ENCODE measurements at regions of chr6 and their contacts with region 1.

Region 1: GRCh38 chr6:24205020-24205492 is 79.0 kb downstream of the NRSN1 start:
- DNase-seq: peak; percentile 78
- ATAC-seq: peak; percentile 51
- H3K4me3 ChIP-seq: no peak overlapping the region
- H3K27ac ChIP-seq: no peak overlapping the region
- H3K4me1 ChIP-seq: no peaks in the 10 kb centered on the region
- H3K27me3 ChIP-seq: peaks cover 20% of the 10 kb centered on the region
- CTCF ChIP-seq: peak; percentile 81

Region 2: GRCh38 chr6:24064082-24064481 is 141.0 kb before region 1 on chr6:
- CTCF ChIA-PET with region 1: no interaction called
- POLR2A ChIA-PET with region 1: interaction called, 5 read pairs
- intact Hi-C with region 1: loop called (anchors 1 kb)
- DNase-seq: peak; percentile 57
- ATAC-seq: peak; percentile 55; the same call in 1 of the 2 replicates
- H3K4me3 ChIP-seq: no peak overlapping the region
- H3K27ac ChIP-seq: no peak overlapping the region
- H3K4me1 ChIP-seq: no peaks in the 10 kb centered on the region
- H3K27me3 ChIP-seq: peaks cover 24% of the 10 kb centered on the region
- CTCF ChIP-seq: peak; percentile 83

Region 3: DNA sequence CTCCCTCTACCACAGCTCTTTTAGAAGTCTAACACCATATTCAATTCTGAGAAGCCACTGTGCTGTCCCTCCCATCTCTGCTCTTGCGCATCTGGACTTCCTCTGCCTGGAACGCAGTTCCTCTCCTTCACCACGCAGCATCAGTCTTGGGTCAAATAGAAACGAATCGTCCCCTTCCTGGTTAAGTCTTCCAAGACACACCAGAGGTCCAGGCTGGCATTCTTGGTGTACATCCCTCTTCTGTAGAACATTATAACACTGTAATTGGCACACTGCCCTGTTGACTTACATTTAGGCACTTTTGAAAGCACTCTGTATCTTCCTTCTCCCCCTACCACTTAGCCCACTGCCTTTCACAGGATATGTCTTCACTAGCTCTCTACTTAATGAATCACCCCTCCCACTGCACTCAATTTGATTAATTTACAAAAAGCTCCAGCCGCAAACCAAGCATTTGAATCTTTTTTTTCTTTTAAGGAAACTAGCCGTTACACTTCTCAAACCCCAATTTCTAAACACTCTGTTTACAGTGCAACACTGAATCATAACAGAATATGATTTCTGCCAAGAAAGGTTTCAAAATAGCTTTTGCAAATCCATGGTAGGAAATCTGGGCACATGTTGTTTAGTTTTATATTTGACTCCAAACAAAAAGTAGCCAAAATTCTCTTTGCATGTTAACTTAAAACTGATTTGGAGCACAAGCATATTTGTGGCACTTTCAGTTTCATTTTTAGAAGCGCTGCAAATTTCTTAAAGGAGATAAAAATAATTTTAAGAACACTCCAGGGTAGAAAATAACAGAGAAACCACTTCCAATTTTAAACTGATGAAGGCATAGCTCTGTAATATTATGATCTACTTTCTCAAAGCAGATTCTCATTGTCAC is 933.4 kb after region 1 on chr6:
- CTCF ChIA-PET with region 1: no interaction called
- POLR2A ChIA-PET with region 1: no interaction called
- intact Hi-C with region 1: no loop called
- DNase-seq: peak; percentile 54
- ATAC-seq: peak; percentile 98
- H3K4me3 ChIP-seq: peak overlapping the region; percentile 69
- H3K27ac ChIP-seq: no peak overlapping the region
- H3K4me1 ChIP-seq: no peaks in the 10 kb centered on the region; the same call in 1 of the 2 replicates
- H3K27me3 ChIP-seq: no peaks in the 10 kb centered on the region
- CTCF ChIP-seq: no peak